Aorta (tissue), 5 donors: ENCODE measurements at regions of chr12 and their contacts with region 1.

Region 1: DNA sequence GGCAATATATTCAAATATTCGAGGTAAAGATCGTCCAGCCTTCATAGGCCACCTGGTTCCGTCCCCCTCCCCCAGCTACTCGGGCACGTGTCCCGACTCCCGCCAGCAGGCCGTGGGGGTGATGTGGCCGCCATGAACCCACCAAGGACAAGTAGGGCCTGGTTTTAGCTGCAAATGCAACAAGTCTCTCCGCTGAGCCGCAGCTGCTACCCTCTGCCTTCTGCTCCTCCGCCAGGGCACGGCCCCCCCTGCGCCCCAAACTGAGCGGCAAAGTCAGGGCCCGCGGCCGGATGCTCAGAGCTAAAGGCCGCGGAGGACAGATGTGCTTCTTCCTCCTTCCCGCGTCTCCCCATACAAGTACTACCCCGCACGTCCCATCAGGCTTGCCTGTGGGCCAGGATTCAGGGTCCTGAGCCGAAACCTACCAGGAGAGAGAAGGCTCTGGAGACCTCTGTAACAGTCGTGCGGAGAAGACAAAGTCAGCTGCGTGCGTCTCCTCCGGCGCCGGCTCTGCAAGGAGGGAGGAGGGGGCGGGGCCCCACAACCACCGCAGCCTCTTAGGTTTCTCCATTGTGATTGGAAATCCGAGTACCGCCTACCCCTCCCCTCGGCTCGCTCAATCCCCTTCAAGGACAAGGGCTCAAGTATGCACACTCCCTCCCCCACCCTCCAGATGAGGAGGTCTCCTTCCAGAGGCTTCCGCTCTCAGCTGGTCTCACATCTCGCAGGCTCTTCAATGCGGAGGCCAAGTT is at the start of gene LDHB:
- DNase-seq: peak; percentile 96 to 97
- ATAC-seq: peak; percentile 99
- H3K4me3 ChIP-seq: peak within 1 kb of the TSS; percentile 54 to 78
- H3K27ac ChIP-seq: peak within 1 kb of the TSS; percentile 24 to 84
- H3K4me1 ChIP-seq: no peaks in the 10 kb centered on the region
- H3K27me3 ChIP-seq: no peaks in the 10 kb centered on the region
- total RNA-seq, gene LDHB: 251 to 260 TPM

Region 2: DNA sequence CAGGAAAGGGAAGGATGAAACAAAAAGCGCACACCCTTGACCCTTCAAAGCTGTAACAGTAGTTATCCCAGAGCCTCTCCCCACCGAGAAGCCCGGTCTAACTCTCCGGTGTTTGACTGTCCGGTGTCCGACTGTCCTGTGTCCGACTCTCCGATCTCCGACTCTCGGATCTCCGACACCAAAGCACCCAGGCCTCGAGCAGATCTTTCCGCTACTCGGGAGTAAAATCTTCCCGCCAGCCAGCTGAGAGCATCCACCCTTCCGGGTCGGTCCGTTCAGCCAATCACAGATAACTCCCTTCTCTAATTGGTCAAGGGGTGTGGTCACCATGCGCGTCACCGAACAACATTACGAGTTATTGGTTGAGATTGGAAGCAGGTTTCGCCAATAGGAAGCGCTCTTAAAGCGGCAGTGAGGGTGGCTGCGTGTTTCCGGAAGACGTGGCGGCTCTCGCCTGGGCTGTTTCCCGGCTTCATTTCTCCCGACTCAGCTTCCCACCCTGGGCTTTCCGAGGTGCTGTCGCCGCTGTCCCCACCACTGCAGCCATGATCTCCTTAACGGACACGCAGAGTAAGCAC is 156.0 kb before region 1 on chr12 and contains the starts of genes GOLT1B and RECQL:
- intact Hi-C with region 1: loop called (anchors 5 to 10 kb)
- DNase-seq: peak; percentile 92 to 95
- ATAC-seq: peak; percentile 99
- H3K4me3 ChIP-seq: peak within 1 kb of the TSS; percentile 70 to 91
- H3K27ac ChIP-seq: peak within 1 kb of the TSS; percentile 1 to 97
- H3K4me1 ChIP-seq: peaks cover 3 to 15% of the 10 kb centered on the region in 2 donors
- H3K27me3 ChIP-seq: no peaks in the 10 kb centered on the region
- total RNA-seq, gene GOLT1B: 33.9 to 45.4 TPM
- total RNA-seq, gene RECQL: 44.2 to 52.4 TPM

Region 3: GRCh38 chr12:21642707-21643389 is 14.7 kb before region 1 on chr12:
- intact Hi-C with region 1: no loop called
- DNase-seq: no peak
- ATAC-seq: no peak
- H3K4me3 ChIP-seq: no peak overlapping the region
- H3K27ac ChIP-seq: no peak overlapping the region
- H3K4me1 ChIP-seq: no peaks in the 10 kb centered on the region
- H3K27me3 ChIP-seq: no peaks in the 10 kb centered on the region

Region 4: GRCh38 chr12:21710948-21711775 is 53.7 kb after region 1 on chr12:
- intact Hi-C with region 1: no loop called
- DNase-seq: no peak
- ATAC-seq: no peak
- H3K4me3 ChIP-seq: no peak overlapping the region
- H3K27ac ChIP-seq: no peak overlapping the region
- H3K4me1 ChIP-seq: peaks cover 0 to 1% of the 10 kb centered on the region in 2 donors
- H3K27me3 ChIP-seq: no peaks in the 10 kb centered on the region

Region 5: DNA sequence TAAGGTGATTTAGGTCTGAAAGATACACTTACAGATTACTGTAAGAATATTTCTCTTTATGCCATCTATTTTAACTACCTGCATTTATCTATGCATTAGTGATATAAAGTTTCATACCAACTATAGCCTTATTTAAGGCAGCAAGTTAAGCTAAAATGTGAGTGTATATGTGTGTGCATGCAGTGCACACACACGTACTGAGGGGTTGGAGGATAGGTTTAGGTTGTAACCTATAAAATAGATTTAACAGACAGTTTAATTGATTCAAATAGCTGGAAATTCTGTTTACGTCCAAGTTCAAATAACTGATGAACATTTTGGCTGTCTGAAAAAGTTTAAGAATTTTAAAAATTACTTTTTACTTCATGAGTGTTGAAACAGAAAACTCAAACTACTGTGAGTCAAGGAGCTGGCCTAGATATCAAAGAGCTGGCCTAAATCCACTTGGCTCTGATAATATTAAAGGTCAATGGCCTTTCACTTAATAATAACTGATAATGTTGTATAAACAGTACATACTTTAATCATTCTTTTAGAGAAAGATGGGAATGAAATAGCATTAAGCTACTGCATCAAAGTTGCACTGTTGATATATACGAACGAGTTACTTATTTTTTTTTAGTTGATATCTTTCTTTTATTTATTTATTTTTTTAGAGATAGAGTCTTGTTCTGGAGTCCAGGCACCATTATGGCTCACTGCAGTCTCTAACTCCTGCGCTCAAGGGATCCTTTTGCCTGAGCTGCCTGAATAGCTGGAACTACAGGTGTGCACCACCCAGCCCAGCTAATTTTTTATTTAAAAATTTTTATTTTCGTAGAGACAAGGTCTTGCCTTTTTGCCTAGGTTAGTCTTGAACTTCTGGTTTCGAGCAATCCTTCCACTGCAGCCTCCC is 130.8 kb after region 1 on chr12:
- intact Hi-C with region 1: no loop called
- DNase-seq: no peak
- ATAC-seq: no peak
- H3K4me3 ChIP-seq: no peak overlapping the region
- H3K27ac ChIP-seq: no peak overlapping the region
- H3K4me1 ChIP-seq: peaks cover 2 to 4% of the 10 kb centered on the region in 2 donors
- H3K27me3 ChIP-seq: no peaks in the 10 kb centered on the region